A549 (cell line): ENCODE measurements at regions of chr6 and their contacts with region 1.

Region 1: GRCh38 chr6:155248008-155249001 is 15.5 kb upstream of the CLDN20 start:
- DNase-seq: peak; percentile 21 to 50
- ATAC-seq: peak; percentile 49 to 81; a peak in 3 of 6 replicates
- H3K4me3 ChIP-seq: no peak overlapping the region
- H3K27ac ChIP-seq: peak overlapping the region; percentile 29 to 80; a peak in 3 of 6 replicates
- H3K4me1 ChIP-seq: peaks cover 15% of the 10 kb centered on the region
- CTCF ChIP-seq: peak; percentile 53
- EP300 ChIP-seq: no peak
- POLR2A ChIP-seq: no peak
- RAD21 ChIP-seq: peak; percentile 64 to 71

Region 2: GRCh38 chr6:155174576-155175211 is 73.6 kb before region 1 on chr6:
- CTCF ChIA-PET with region 1: interaction called, 36 read pairs
- POLR2A ChIA-PET with region 1: interaction called, 4 read pairs
- DNase-seq: peak; percentile 76 to 82
- ATAC-seq: peak; percentile 93 to 95
- H3K4me3 ChIP-seq: no peak overlapping the region
- H3K27ac ChIP-seq: peak overlapping the region in 1 of 2 experiments; percentile 56; a peak in 2 of 6 replicates
- H3K4me1 ChIP-seq: peaks cover 29% of the 10 kb centered on the region
- CTCF ChIP-seq: peak; percentile 61
- EP300 ChIP-seq: no peak
- POLR2A ChIP-seq: no peak
- RAD21 ChIP-seq: peak; percentile 87 to 88

Region 3: GRCh38 chr6:155292711-155293110 is 44.4 kb after region 1 on chr6:
- CTCF ChIA-PET with region 1: no interaction called
- POLR2A ChIA-PET with region 1: no interaction called
- DNase-seq: no peak
- ATAC-seq: no peak
- H3K4me3 ChIP-seq: no peak overlapping the region
- H3K27ac ChIP-seq: no peak overlapping the region
- H3K4me1 ChIP-seq: no peaks in the 10 kb centered on the region
- CTCF ChIP-seq: no peak
- EP300 ChIP-seq: no peak
- POLR2A ChIP-seq: no peak
- RAD21 ChIP-seq: no peak